Right cardiac atrium (tissue), 5 donors: ENCODE measurements at regions of chr1 and their contacts with region 1.

Region 1: DNA sequence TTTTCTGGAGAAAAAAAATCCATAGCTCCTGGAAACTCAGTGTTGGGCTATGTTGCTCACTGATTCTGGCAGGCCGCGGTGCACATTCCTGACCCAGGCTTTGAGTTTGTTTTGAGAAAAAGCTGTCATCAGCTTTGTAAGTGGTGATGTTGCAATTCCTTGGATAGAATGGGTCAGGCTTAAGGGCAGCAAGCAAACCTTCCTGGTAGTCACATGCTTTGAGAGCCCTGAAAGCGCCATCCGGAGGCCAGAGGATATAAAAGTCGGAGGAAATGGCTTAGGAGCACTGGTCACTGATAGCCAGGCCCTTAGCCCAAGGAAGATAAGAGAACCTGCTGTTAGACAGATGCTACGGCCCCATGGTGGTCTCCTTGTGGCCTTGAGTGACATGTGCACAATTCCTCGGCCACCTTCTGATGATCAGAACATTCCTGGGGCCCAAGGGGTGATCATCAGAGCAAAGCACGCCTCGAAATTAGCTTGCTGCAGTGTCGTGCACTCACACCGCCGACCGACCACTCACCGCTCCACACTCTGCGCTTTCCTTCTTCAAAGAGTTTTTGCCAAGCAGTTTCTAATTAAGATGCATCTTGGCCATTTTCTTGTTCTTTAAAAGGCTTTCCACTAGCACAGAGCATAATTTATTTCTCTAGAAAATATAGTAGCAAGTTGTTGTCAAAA is 78.6 kb downstream of the MAN1C1 start:
- DNase-seq: peak; percentile 81 to 93 (median 91)
- ATAC-seq: peak; percentile 91
- H3K4me3 ChIP-seq: no peak overlapping the region
- H3K27ac ChIP-seq: peak overlapping the region; percentile 78
- H3K4me1 ChIP-seq: peaks cover 13% of the 10 kb centered on the region
- H3K27me3 ChIP-seq: no peaks in the 10 kb centered on the region

Region 2: GRCh38 chr1:25616095-25616986 is 78.9 kb before region 1 on chr1 and contains the start of gene MAN1C1:
- intact Hi-C with region 1: loop called in 1 of 4 experiments (anchors 5 kb)
- DNase-seq: peak; percentile 92 to 97 (median 96)
- ATAC-seq: peak; percentile 95
- H3K4me3 ChIP-seq: peak within 1 kb of the TSS; percentile 98
- H3K27ac ChIP-seq: peak within 1 kb of the TSS; percentile 20
- H3K4me1 ChIP-seq: peaks cover 9% of the 10 kb centered on the region
- H3K27me3 ChIP-seq: no peaks in the 10 kb centered on the region
- total RNA-seq, gene MAN1C1: 10.6 to 15.7 (median 12.8) TPM

Region 3: GRCh38 chr1:25737130-25737529 is 41.9 kb after region 1 on chr1:
- intact Hi-C with region 1: loop called in 2 of 4 experiments (anchors 5 kb)
- DNase-seq: peak in 2 of 3 donors; percentile 54 to 63
- ATAC-seq: peak; percentile 42 to 51
- H3K4me3 ChIP-seq: no peak overlapping the region
- H3K27ac ChIP-seq: no peak overlapping the region
- H3K4me1 ChIP-seq: peaks cover 9% of the 10 kb centered on the region
- H3K27me3 ChIP-seq: no peaks in the 10 kb centered on the region

Region 4: DNA sequence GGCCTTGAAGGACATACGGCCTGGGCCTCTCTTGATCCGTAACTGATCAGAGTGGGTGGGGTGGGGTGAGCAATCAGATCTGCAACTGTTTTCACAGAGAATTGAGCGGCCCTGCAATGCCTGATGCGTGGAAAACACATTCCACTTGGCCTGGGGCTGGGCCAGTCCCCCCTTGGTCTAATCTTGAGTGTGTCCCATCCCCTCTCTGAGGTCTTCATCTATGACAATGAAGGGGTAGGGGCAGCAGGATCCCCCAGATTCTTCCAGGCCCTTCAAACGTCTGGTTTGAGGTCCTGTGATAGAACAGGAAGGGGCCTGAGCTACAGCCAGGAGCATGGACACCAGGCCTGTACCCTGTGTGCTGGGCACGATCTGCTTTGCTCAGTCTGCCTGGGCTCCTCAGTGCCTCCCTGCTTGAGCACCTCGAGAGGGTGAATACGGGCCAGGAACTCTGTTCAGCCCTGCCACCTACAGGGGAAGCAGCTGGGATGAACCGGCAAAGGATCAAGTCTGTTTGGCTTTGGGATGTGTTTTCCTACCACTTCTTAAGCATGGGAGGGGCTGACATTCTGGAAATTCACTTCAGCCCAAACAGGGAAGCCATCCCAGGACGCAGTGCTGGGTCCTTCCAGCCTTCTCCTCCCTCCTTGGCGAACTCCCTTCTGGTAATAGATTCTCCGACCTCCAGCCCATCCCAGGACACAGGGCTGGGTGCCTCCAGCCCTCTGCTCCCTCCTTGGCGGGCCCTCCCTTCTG is 48.8 kb after region 1 on chr1:
- intact Hi-C with region 1: loop called in 2 of 4 experiments (anchors 5 kb)
- DNase-seq: peak; percentile 71 to 86 (median 83)
- ATAC-seq: peak; percentile 84 to 87
- H3K4me3 ChIP-seq: no peak overlapping the region
- H3K27ac ChIP-seq: peak overlapping the region; percentile 99
- H3K4me1 ChIP-seq: peaks cover 14% of the 10 kb centered on the region
- H3K27me3 ChIP-seq: no peaks in the 10 kb centered on the region

Region 5: GRCh38 chr1:25796811-25797458 is 101.7 kb after region 1 on chr1:
- intact Hi-C with region 1: loop called in 2 of 4 experiments (anchors 10 kb)
- DNase-seq: peak; percentile 85 to 96 (median 93)
- ATAC-seq: peak in 1 of 2 donors; percentile 32
- H3K4me3 ChIP-seq: no peak overlapping the region
- H3K27ac ChIP-seq: no peak overlapping the region
- H3K4me1 ChIP-seq: peaks cover 6% of the 10 kb centered on the region
- H3K27me3 ChIP-seq: no peaks in the 10 kb centered on the region